ENCODE measurements at regions of chr20 and their contacts with region 1.

Region 1: DNA sequence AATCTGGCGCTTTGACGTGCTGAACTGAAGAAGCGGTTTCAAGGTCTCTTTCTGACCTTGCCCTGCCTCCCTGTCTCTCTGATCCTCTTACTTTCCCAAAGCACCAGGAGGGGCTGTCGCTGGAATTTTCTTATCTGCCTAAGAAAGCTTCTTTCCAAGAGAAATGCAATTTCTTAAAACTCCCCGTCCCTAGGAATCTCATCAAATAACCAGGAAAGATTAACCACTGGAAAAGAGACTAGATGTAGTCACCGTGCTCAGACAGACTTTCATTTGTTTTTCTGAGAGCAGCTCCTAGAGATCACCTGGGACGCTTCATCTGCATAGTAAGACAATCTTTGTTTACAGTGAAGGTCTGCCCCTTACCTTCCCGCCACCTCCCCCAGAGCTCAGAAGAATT is 38.6 kb downstream of the PDYN start:
- DNase-seq: no peak
- H3K4me3 ChIP-seq: no peak overlapping the region
- CTCF ChIP-seq: no peak

Region 2: GRCh38 chr20:1965520-1966351 is 10.5 kb after region 1 on chr20:
- CTCF ChIA-PET with region 1: interaction called, 20 read pairs
- POLR2A ChIA-PET with region 1: no interaction called
- DNase-seq: no peak
- H3K4me3 ChIP-seq: peak overlapping the region; percentile 24
- CTCF ChIP-seq: peak; percentile 95

Measured in AG04449 (cell line).